Sigmoid colon (tissue), 7 donors: ENCODE measurements at regions of chr11 and their contacts with region 1.

Region 1: DNA sequence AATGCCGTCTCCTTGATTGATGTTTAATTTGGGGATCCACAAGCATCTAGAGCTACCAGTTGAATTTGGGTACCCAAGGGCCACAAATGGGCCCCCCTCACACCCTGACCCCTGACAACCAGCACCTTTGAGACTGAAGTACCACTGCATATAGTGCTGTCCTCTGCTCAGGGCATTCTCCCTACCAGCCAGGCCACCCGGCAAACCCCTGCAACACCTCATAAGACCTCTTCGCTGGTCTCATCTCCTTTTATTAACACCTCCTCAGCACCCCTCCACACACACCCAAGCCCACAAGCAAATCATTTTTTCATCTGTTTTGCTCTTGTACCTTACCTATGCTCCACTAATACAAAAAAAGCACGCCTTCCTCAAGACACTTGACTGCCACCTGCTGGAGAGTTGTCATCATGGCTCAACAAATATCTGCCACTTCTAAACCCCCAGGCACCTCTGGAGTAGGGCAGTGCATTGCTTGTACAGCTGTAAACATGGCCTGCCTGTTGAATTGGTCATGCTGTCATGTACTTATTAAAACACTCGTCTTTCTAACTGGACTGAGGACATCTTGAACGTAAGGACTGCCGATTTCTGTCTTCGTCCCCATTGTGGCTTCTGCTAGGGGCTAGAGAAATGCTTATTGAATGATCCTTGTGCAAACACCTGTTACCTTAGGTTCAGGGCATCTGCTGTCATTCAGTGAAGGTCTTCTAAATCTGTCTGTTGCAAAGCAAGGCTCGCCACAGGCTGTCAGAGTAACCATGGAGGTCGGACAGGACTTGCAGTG is 66.5 kb downstream of the BMAL1 start:
- DNase-seq: no peak
- H3K4me3 ChIP-seq: no peak overlapping the region
- H3K27ac ChIP-seq: no peak overlapping the region
- H3K4me1 ChIP-seq: peaks cover 0 to 16% (median 10%) of the 10 kb centered on the region in 4 donors
- H3K27me3 ChIP-seq: no peaks in the 10 kb centered on the region
- CTCF ChIP-seq: peak; percentile 54 to 82 (median 74)
- EP300 ChIP-seq: no peak
- POLR2A ChIP-seq: no peak

Region 2: GRCh38 chr11:12963792-12964536 is 380.2 kb before region 1 on chr11:
- intact Hi-C with region 1: loop called (anchors 2 kb)
- DNase-seq: peak; percentile 73
- H3K4me3 ChIP-seq: no peak overlapping the region
- H3K27ac ChIP-seq: no peak overlapping the region
- H3K4me1 ChIP-seq: no peaks in the 10 kb centered on the region
- H3K27me3 ChIP-seq: no peaks in the 10 kb centered on the region
- CTCF ChIP-seq: peak; percentile 50 to 90 (median 79)
- EP300 ChIP-seq: no peak
- POLR2A ChIP-seq: no peak

Region 3: DNA sequence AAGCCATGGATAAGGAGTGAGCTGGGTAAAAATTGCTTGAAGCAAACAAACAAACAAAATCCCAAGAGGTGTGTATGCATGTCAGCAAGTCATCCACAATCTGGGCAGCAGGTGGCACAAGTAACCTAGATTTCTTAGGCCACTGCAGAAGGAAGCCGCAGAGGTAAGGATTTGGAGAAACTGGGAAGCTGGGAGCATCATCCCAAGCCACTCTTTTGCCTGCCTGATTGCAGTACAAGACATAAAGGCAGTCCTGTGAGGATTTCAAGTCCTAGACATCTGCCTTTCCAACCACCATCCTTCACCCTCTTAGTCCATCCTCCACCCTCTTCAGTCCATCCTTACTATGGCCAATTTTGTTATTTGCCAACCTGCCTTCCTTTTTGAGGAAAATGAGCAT is 133.7 kb before region 1 on chr11:
- intact Hi-C with region 1: loop called (anchors 1 kb)
- DNase-seq: peak; percentile 74
- H3K4me3 ChIP-seq: no peak overlapping the region
- H3K27ac ChIP-seq: no peak overlapping the region
- H3K4me1 ChIP-seq: peaks cover 0 to 5% (median 0%) of the 10 kb centered on the region in 4 donors
- H3K27me3 ChIP-seq: peaks cover 0 to 3% (median 0%) of the 10 kb centered on the region in 3 donors
- CTCF ChIP-seq: peak; percentile 18 to 64 (median 50)
- EP300 ChIP-seq: no peak
- POLR2A ChIP-seq: no peak